Naive thymus-derived CD4-positive, alpha-beta T cell (primary cell): ENCODE measurements at regions of chr2 and their contacts with region 1.

Region 1: GRCh38 chr2:230219419-230220331 is at the start of gene SP110:
- DNase-seq: peak; percentile 38 to 84 (median 81)
- ATAC-seq: peak; percentile 93
- H3K4me3 ChIP-seq: peak within 1 kb of the TSS; percentile 95
- H3K4me3 Mint-ChIP-seq: peak within 1 kb of the TSS; percentile 89 to 100 (median 99)
- H3K27ac ChIP-seq: peak within 1 kb of the TSS; percentile 83
- H3K27ac Mint-ChIP-seq: peak within 1 kb of the TSS; percentile 94 to 100 (median 99)
- H3K4me1 ChIP-seq: peaks cover 22 to 36% of the 10 kb centered on the region in 2 donors
- H3K4me1 Mint-ChIP-seq: peaks cover 44 to 75% (median 67%) of the 10 kb centered on the region in 7 donors
- H3K27me3 ChIP-seq: no peaks in the 10 kb centered on the region
- H3K27me3 Mint-ChIP-seq: no peaks in the 10 kb centered on the region
- total RNA-seq, gene SP110: 97.5 to 182 (median 117) TPM

Region 2: DNA sequence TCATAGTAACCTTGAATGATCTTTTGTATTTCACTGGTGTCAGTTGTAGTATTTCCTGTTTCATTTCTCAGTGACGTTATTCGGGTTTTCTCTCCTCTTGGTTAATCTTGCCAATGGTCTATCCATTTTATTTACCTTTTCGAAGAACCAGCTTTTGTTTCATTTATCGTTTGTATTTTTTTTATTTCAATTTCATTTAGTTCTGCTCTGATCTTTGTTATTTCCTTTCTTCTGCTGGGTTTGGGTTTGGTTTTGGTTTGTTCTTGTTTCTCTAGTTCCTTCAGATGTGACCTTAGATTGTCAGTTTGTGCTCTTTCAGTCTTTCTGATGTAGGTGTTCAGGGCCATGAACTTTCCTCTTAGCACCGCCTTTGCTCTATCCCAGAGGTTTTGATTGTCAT is 42.6 kb after region 1 on chr2:
- CTCF ChIA-PET with region 1: no interaction called
- POLR2A ChIA-PET with region 1: no interaction called
- intact Hi-C with region 1: loop called in 1 of 2 experiments (anchors 1 kb)
- DNase-seq: peak in 7 of 9 donors; percentile 32 to 86 (median 77)
- ATAC-seq: peak; percentile 85
- H3K4me3 ChIP-seq: no peak overlapping the region
- H3K4me3 Mint-ChIP-seq: peak overlapping the region in 9 of 10 donors; percentile 54 to 82 (median 67)
- H3K27ac ChIP-seq: peak overlapping the region; percentile 22
- H3K27ac Mint-ChIP-seq: peak overlapping the region; percentile 68 to 99 (median 83)
- H3K4me1 ChIP-seq: peaks cover 13 to 23% of the 10 kb centered on the region in 2 donors
- H3K4me1 Mint-ChIP-seq: peaks cover 29 to 68% (median 53%) of the 10 kb centered on the region in 7 donors
- H3K27me3 ChIP-seq: no peaks in the 10 kb centered on the region
- H3K27me3 Mint-ChIP-seq: no peaks in the 10 kb centered on the region

Region 3: GRCh38 chr2:230326453-230327417 is 107.1 kb after region 1 on chr2 and contains the start of gene SP140L:
- CTCF ChIA-PET with region 1: interaction called, 3 read pairs
- POLR2A ChIA-PET with region 1: interaction called, 32 read pairs
- intact Hi-C with region 1: loop called in 1 of 2 experiments (anchors 1 kb)
- DNase-seq: peak; percentile 48 to 83 (median 73)
- ATAC-seq: peak; percentile 99
- H3K4me3 ChIP-seq: peak within 1 kb of the TSS; percentile 86
- H3K4me3 Mint-ChIP-seq: peak within 1 kb of the TSS; percentile 90 to 100 (median 94)
- H3K27ac ChIP-seq: peak within 1 kb of the TSS; percentile 92
- H3K27ac Mint-ChIP-seq: peak within 1 kb of the TSS; percentile 95 to 99 (median 99)
- H3K4me1 ChIP-seq: peaks cover 23 to 36% of the 10 kb centered on the region in 2 donors
- H3K4me1 Mint-ChIP-seq: peaks cover 58 to 86% (median 85%) of the 10 kb centered on the region in 7 donors
- H3K27me3 ChIP-seq: no peaks in the 10 kb centered on the region
- H3K27me3 Mint-ChIP-seq: no peaks in the 10 kb centered on the region
- total RNA-seq, gene SP140L: 62.8 to 121 (median 89.5) TPM

Region 4: DNA sequence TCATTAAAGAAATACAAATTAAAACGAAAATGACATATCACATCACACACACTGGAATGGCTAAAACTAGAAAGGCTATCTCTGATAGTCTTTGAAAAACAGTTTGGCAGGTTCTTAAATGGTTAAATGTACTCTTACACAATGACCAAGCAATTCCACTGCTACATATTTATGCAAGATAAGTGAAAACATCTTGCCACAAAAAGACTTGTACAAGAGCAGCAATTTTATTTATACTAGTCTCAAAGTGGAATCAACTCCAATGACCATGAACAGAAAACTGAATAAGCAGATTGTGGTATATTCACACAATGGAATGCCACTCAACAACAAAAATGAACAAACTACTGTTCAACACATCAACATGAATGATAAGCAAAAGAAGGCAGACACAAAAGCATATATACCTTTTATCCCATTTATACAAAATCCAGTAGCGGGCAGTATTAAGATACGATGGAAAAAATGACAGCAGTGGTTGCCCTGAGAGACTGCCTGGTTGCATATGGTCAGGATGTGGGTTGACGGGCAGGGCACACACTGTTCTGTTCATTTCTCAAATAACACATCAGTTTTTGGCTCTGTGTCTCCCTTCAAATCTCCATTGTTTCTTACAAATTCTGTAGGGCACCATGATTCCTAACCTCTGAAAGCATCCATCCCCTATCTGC is 221.7 kb after region 1 on chr2:
- CTCF ChIA-PET with region 1: no interaction called
- POLR2A ChIA-PET with region 1: no interaction called
- intact Hi-C with region 1: loop called in 1 of 2 experiments (anchors 1 kb)
- DNase-seq: peak in 7 of 9 donors; percentile 26 to 68 (median 46)
- ATAC-seq: peak; percentile 84
- H3K4me3 ChIP-seq: peak overlapping the region; percentile 6
- H3K4me3 Mint-ChIP-seq: peak overlapping the region; percentile 32 to 78 (median 68)
- H3K27ac ChIP-seq: peak overlapping the region; percentile 46
- H3K27ac Mint-ChIP-seq: peak overlapping the region; percentile 52 to 87 (median 76)
- H3K4me1 ChIP-seq: peaks cover 30 to 37% of the 10 kb centered on the region in 2 donors
- H3K4me1 Mint-ChIP-seq: peaks cover 33 to 69% (median 55%) of the 10 kb centered on the region in 7 donors
- H3K27me3 ChIP-seq: no peaks in the 10 kb centered on the region
- H3K27me3 Mint-ChIP-seq: no peaks in the 10 kb centered on the region

Region 5: GRCh38 chr2:230602562-230603230 is 383.0 kb after region 1 on chr2:
- CTCF ChIA-PET with region 1: no interaction called
- POLR2A ChIA-PET with region 1: interaction called, 5 read pairs
- intact Hi-C with region 1: loop called in 1 of 2 experiments (anchors 2 kb)
- DNase-seq: peak in 7 of 9 donors; percentile 51 to 79 (median 74)
- ATAC-seq: peak; percentile 90
- H3K4me3 ChIP-seq: peak overlapping the region; percentile 14
- H3K4me3 Mint-ChIP-seq: peak overlapping the region; percentile 66 to 90 (median 78)
- H3K27ac ChIP-seq: peak overlapping the region; percentile 64
- H3K27ac Mint-ChIP-seq: peak overlapping the region; percentile 93 to 99 (median 98)
- H3K4me1 ChIP-seq: peaks cover 35 to 38% of the 10 kb centered on the region in 2 donors
- H3K4me1 Mint-ChIP-seq: peaks cover 27 to 84% (median 71%) of the 10 kb centered on the region in 7 donors
- H3K27me3 ChIP-seq: no peaks in the 10 kb centered on the region
- H3K27me3 Mint-ChIP-seq: no peaks in the 10 kb centered on the region

Region 6: DNA sequence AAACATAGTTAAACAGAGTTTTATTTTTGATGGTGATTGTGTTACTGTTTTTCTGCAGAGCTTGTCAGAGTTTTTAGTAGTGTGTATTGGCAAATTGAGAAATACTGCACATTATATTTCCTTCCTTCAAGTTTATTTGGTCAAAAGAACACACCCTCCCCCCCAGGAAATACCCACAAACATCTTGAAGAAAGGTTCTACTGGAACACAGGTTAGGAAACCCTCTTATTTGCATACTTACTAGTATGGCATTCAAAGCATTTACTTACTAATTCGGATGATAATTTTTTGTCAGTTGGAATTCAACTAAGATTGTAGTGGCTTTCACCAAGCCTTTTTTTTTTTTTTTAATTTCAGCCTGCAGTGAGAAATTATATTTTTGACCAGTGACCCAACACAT is 502.0 kb after region 1 on chr2:
- CTCF ChIA-PET with region 1: no interaction called
- POLR2A ChIA-PET with region 1: no interaction called
- intact Hi-C with region 1: loop called in 1 of 2 experiments (anchors 2 kb)
- DNase-seq: peak in 4 of 9 donors; percentile 8 to 25 (median 22)
- ATAC-seq: no peak
- H3K4me3 ChIP-seq: no peak overlapping the region
- H3K4me3 Mint-ChIP-seq: peak overlapping the region; percentile 38 to 85 (median 64)
- H3K27ac ChIP-seq: peak overlapping the region; percentile 55
- H3K27ac Mint-ChIP-seq: peak overlapping the region; percentile 4 to 94 (median 80)
- H3K4me1 ChIP-seq: peaks cover 76 to 80% of the 10 kb centered on the region in 2 donors
- H3K4me1 Mint-ChIP-seq: peaks cover 61 to 97% (median 87%) of the 10 kb centered on the region in 7 donors
- H3K27me3 ChIP-seq: no peaks in the 10 kb centered on the region
- H3K27me3 Mint-ChIP-seq: no peaks in the 10 kb centered on the region

Region 7: DNA sequence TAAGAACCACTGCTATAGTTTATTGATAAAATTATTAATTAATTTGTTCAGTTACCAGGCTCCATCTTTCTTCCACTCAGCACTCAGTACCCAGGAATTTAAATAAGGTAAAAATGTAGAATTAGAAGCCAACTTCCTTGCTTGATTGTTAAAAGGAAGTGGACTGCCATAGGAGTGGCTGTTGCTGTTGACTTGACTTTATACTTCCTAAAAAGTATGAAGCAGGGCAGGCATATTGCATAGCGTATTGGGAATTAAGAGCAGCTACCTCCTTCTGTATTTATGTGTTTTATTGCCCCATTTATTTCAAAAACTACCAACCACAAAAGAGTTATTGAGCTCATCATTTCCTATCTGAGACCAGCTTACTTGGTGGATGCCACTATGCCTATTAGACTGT is 864.9 kb after region 1 on chr2:
- CTCF ChIA-PET with region 1: no interaction called
- POLR2A ChIA-PET with region 1: no interaction called
- intact Hi-C with region 1: no loop called
- DNase-seq: no peak
- ATAC-seq: peak; percentile 40
- H3K4me3 ChIP-seq: no peak overlapping the region
- H3K4me3 Mint-ChIP-seq: no peak overlapping the region
- H3K27ac ChIP-seq: no peak overlapping the region
- H3K27ac Mint-ChIP-seq: no peak overlapping the region
- H3K4me1 ChIP-seq: no peaks in the 10 kb centered on the region
- H3K4me1 Mint-ChIP-seq: peaks cover 0 to 2% (median 0%) of the 10 kb centered on the region in 7 donors
- H3K27me3 ChIP-seq: no peaks in the 10 kb centered on the region
- H3K27me3 Mint-ChIP-seq: no peaks in the 10 kb centered on the region